Endothelial cell of umbilical vein (primary cell): ENCODE measurements at regions of chr16 and their contacts with region 1.

Region 1: DNA sequence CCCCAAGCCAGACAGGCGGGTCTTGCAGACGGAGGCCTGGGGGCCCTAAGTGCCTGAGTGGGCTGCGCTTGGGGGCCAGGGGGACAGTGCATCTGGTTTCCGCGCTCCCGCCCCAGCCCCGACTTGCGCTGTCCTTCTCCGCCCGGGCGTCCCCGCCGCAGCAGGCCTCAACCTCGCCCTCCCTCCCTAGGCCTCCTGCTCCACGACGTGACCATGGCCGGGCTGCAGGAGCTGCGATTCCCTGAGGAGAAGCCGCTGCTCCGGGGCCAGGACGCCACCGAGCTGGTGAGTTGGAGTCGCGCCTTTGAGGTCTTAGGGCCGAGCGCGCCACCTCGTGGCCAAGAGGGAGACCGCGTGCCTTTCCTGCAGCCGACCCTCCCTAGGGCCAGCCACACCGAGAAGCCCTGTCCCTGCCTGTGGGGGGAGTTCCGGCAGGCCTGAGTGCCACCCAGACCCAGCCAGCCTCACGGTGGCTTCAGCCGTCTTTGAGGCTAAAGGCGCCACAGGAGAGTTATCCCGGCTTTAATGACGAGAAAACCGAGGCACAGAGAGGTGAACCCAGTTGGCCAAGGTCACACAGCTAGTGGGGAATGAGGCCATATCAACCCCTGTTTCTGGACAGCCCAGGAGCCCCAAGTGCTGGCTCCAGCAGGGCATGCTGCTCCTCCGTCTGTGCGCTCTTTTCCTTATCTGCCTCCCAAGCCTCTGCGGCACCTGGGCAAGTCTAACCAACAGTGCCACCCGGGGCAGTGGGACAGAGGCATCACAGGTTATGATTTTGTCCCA is 12.2 kb upstream of the NDRG4 start:
- DNase-seq: peak; percentile 75
- H3K4me3 ChIP-seq: no peak overlapping the region
- H3K27ac ChIP-seq: no peak overlapping the region
- H3K4me1 ChIP-seq: no peaks in the 10 kb centered on the region
- H3K27me3 ChIP-seq: no peaks in the 10 kb centered on the region
- CTCF ChIP-seq: peak; percentile 94 to 97
- POLR2A ChIP-seq: no peak

Region 2: GRCh38 chr16:58299757-58300349 is 187.9 kb before region 1 on chr16:
- CTCF ChIA-PET with region 1: interaction called, 35 read pairs
- POLR2A ChIA-PET with region 1: no interaction called
- dilution Hi-C with region 1: no loop called
- intact Hi-C with region 1: loop called (anchors 1 kb)
- DNase-seq: peak; percentile 36
- H3K4me3 ChIP-seq: no peak overlapping the region
- H3K27ac ChIP-seq: no peak overlapping the region
- H3K4me1 ChIP-seq: no peaks in the 10 kb centered on the region
- H3K27me3 ChIP-seq: peaks cover 0 to under 1% of the 10 kb centered on the region in 2 experiments
- CTCF ChIP-seq: peak; percentile 82 to 87
- POLR2A ChIP-seq: no peak

Region 3: GRCh38 chr16:58336332-58337089 is 151.2 kb before region 1 on chr16:
- CTCF ChIA-PET with region 1: interaction called, 550 read pairs
- POLR2A ChIA-PET with region 1: interaction called, 5 read pairs
- dilution Hi-C with region 1: no loop called
- intact Hi-C with region 1: loop called (anchors 1 kb)
- DNase-seq: peak; percentile 79
- H3K4me3 ChIP-seq: peak overlapping the region in 1 of 3 experiments; percentile 50
- H3K27ac ChIP-seq: no peak overlapping the region
- H3K4me1 ChIP-seq: peaks cover 7% of the 10 kb centered on the region
- H3K27me3 ChIP-seq: peaks cover 0 to 1% of the 10 kb centered on the region in 2 experiments
- CTCF ChIP-seq: peak; percentile 85 to 94
- POLR2A ChIP-seq: no peak

Region 4: DNA sequence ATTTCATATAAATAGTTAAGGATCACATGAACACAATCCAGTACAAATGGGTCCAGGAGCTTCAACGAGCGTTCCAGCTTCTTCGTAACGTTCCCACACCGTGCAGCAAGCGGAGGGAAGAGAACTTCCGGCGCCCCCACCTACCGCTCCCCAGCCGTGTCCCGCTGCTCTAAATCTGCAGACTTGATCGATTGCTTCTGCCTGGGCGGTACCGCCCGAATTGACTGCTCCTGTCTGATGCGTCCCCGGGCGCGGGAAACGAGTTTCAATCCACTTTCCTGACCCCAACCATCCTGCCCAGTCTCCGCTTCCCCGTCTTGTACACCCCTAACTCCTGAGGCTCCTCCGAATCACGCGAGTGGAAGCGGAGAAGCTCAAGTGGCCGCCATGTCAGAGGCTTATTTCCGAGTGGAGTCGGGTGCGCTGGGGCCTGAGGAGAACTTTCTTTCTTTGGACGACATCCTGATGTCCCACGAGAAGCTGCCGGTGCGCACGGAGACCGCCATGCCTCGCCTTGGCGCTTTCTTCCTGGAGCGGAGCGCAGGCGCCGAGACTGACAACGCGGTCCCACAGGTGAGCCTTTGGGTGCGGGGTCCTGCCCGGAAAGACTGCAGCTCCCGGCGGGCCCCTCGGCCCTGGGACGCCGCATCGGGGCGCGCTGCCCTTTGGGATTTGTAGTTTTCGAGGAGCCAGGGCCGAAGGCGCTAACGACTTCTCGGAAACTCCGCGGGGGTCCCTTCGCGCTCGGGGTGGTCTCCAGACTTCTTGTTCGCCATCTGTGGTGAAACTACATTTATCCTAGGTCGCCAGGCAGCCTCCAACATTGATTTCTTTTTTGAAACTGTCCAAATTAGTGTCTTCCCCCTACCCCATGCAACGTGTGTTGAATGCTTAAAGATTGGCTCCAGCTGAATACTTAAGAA is 95.3 kb before region 1 on chr16 and contains the start of gene GINS3:
- CTCF ChIA-PET with region 1: interaction called, 10 read pairs
- POLR2A ChIA-PET with region 1: no interaction called
- dilution Hi-C with region 1: no loop called
- intact Hi-C with region 1: loop called (anchors 2 kb)
- DNase-seq: peak; percentile 82
- H3K4me3 ChIP-seq: peak within 1 kb of the TSS; percentile 89 to 96 (median 95)
- H3K27ac ChIP-seq: peak within 1 kb of the TSS; percentile 79
- H3K4me1 ChIP-seq: peaks cover 9% of the 10 kb centered on the region
- H3K27me3 ChIP-seq: no peaks in the 10 kb centered on the region
- CTCF ChIP-seq: no peak
- POLR2A ChIP-seq: no peak
- total RNA-seq, gene GINS3: 24.1 and 29.0 TPM in 2 replicates

Region 5: DNA sequence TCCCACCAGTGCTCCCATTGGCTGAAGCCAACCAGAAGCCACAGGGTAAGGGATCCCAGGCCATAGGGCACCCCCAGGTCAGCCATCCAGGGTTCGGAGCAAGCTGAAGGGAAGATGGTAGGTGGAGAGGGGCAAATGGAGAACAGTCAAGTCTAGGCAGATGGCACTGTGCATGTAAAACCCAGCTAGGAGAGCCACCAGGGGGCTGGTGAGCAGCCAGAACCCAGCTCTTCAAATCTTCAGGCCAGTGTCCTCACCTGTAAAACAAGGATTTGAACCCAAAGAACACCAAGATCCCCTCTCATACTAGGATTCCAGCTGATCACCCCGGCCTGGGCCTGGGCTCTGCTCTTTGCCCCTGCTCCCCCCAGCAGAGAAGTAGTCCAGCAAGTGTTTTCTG is 52.0 kb before region 1 on chr16:
- CTCF ChIA-PET with region 1: interaction called, 16 read pairs
- POLR2A ChIA-PET with region 1: no interaction called
- dilution Hi-C with region 1: no loop called
- intact Hi-C with region 1: no loop called
- DNase-seq: no peak
- H3K4me3 ChIP-seq: no peak overlapping the region
- H3K27ac ChIP-seq: no peak overlapping the region
- H3K4me1 ChIP-seq: no peaks in the 10 kb centered on the region
- H3K27me3 ChIP-seq: no peaks in the 10 kb centered on the region
- CTCF ChIP-seq: peak in 1 of 2 donors; percentile 34
- POLR2A ChIP-seq: no peak

Region 6: DNA sequence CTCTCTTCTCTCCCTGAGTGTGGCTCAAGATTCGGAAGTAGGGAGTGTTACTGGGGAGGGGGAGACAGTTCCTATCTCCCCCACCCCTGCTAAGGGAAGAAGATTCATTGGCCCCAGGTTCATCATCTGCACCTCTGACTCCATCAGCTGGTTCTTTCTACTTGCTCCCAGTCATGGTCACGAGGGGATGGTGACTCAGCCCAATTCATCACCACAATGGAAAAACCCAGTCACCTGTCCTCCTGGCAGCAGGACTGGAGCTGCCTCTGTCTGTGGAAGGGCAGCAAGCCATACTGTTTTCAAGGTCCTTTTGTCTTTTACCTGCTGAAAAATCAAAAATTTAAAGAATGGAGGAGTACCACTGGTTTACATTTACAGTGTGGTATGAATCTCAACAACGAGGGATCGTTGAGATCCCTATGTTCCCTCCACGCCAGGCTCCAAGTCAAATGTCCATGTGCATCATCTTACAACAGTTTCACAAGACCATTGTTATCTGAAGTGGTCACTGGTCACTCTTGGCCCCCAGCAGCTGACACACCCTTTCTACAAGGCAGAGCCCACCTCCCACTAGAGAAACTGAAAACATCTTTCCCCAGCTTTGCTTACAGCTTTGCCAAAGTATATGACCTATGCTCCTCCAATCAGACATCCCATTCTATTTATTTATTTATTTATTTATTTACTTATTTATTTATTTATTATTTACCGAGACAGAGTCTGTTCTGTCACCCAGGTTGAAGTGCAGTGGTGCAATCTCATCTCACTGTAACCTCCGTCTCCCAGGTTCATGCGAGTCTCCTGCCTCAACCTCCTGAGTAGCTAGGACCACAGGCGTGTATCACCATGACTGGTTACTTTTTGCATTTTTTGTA is 28.2 kb before region 1 on chr16:
- CTCF ChIA-PET with region 1: interaction called, 10 read pairs
- POLR2A ChIA-PET with region 1: no interaction called
- dilution Hi-C with region 1: no loop called
- intact Hi-C with region 1: no loop called
- DNase-seq: peak; percentile 87
- H3K4me3 ChIP-seq: no peak overlapping the region
- H3K27ac ChIP-seq: no peak overlapping the region
- H3K4me1 ChIP-seq: peaks cover 32% of the 10 kb centered on the region
- H3K27me3 ChIP-seq: peaks cover 0 to 4% of the 10 kb centered on the region in 2 experiments
- CTCF ChIP-seq: no peak
- POLR2A ChIP-seq: no peak

Region 7: DNA sequence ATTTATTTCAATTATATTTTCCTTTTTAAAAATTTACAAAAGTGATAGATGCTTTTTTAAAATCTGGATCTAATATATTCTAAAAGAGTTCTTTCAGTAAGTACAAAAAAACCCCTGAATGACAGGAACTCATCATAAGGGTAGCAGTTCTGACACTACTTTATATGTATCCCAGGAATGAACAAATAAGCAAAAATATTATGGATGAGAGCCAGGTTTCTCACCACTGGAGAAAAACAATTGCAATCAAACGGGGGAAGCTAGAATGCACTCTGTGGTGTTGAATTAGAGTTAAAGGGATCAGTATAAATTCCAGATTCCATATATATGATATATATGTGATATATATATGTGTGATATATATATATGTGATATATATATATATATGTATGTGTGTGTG is 11.0 kb before region 1 on chr16:
- CTCF ChIA-PET with region 1: interaction called, 15 read pairs
- POLR2A ChIA-PET with region 1: no interaction called
- dilution Hi-C with region 1: no loop called
- intact Hi-C with region 1: no loop called
- DNase-seq: no peak
- H3K4me3 ChIP-seq: no peak overlapping the region
- H3K27ac ChIP-seq: no peak overlapping the region
- H3K4me1 ChIP-seq: peaks cover 12% of the 10 kb centered on the region
- H3K27me3 ChIP-seq: no peaks in the 10 kb centered on the region
- CTCF ChIP-seq: no peak
- POLR2A ChIP-seq: no peak